GM18951 (cell line): ENCODE measurements at regions of chr13 and their contacts with region 1.

Region 1: GRCh38 chr13:28636674-28637317 is 22.1 kb upstream of the POMP start:
- POLR2A ChIP-seq: no peak

Region 2: GRCh38 chr13:28058866-28059624 is 577.8 kb before region 1 on chr13:
- in situ Hi-C with region 1: no loop called
- POLR2A ChIP-seq: no peak

Region 3: GRCh38 chr13:28329395-28330158 is 307.2 kb before region 1 on chr13:
- in situ Hi-C with region 1: loop called (anchors 5 kb)
- POLR2A ChIP-seq: no peak

Region 4: GRCh38 chr13:28540612-28541011 is 96.2 kb before region 1 on chr13:
- in situ Hi-C with region 1: no loop called
- POLR2A ChIP-seq: no peak